Cardiac septum (tissue), 1 donor: ENCODE measurements at regions of chr10 and their contacts with region 1.

Region 1: DNA sequence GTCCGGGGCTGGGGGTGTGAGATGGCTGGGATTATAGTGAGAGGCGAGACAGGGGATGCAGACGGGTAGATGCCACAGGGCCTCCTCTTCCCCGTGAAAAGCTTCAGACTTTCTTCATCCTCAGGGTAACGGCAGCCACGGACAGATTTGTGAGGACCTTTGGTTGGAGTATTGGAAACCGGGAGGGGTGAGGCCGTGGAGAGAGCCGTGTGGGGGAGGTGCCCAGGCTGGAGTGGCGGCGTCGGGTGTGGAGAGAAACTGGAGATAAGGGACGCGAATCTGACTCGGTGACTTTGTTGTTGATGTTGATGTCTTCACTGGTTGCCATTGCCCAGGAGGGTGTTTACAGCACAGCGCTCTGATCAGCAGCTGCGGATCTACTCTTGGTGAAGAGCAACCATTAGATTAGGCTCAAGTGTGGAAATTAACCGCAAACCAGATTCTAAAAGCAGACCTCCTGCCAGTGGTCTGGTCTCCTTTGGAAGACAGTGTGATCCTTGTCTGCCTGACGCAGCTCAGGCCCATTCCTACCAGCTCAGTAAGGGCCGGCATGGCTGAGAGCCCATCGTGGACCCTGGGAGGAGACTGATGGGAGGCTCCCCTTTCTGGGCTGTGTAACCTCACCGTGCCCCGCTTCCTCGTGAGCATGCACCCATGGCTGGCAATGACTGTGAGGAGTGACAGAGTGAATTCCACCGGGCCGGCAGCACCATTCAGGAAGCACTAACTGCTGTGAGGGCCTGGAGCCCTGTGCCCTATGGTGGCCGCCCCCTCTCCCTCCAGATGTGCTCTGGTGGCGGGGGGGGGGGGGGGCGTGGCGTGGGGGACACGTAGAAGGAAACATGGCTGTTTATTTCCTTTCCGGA is 90.3 kb downstream of the INPP5A start:
- DNase-seq: peak; percentile 84

Region 2: DNA sequence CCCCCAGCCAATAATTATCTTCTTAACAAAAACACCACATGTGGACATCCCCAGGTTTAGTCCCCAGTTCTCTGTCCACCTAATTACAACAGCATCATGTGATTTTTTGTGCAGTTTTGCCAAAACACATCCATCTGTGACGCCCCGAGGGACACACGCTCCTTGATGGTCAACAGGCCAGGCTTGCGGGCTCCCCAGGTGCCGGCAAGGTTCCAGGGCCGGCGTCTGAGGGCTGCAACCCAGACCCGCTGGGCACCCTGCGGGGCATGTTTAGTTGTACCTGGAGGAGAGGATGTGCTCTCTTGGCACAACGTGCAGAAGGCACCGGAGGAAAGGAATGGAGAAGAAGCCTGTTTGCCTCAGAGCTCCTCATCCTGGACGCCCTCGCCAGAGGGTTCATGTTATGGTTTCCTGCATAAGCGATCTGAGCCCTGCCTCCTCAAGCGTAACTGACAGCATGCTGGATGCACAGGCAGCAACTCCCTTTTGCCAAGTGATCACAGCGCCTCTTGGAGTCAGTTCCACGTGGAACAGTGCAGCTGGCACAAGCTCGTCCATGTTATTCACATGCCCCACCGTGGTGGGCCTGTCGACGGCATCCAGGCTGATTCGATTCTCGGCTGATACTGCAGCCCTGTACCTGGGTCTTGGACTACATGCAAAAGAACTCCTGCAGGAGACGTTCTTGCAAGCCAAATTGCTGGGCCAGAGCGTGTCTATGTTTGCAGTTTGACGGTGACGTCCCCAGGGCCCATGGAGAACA is 520.5 kb before region 1 on chr10:
- intact Hi-C with region 1: no loop called
- DNase-seq: peak; percentile 72

Region 3: GRCh38 chr10:132536971-132537712 is 90.8 kb before region 1 on chr10:
- intact Hi-C with region 1: loop called (anchors 1 kb)
- DNase-seq: peak; percentile 100

Region 4: GRCh38 chr10:132588301-132589013 is 39.4 kb before region 1 on chr10:
- intact Hi-C with region 1: loop called (anchors 2 kb)
- DNase-seq: peak; percentile 82